Lower lobe of right lung (tissue), 2 donors: ENCODE measurements at regions of chr3 and their contacts with region 1.

Region 1: DNA sequence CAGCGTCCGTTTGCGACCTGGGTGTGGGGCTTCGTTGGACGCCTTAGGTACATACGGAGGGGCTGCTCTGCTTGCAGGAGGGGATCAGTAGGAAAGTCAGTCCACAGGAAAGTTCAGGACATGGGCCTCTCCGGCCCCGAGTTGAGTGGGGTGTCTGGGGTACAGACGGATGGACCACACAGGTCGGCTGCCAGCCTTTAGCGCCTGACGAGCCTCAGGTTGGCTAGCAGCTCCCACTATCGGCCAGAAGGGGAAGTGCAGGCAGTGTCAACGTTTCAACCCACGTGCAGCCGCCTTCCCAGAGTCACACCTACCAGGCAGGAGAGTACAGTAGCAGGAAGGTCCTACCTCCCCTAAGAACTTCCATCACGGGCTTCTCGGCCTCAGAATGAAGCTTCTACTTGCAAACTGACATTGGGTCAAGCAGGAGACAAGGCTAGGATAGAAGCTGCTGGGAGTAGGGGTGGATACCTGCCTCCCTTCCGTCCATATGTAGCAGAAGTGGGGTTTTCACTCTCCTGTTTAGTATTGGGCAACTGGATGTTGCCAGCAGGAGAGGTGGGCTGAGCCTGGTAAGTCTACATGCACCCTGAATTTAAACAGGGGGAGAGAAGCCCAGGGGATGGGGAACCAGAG is 1.8 kb upstream of the SCN5A start:
- DNase-seq: peak; percentile 76
- ATAC-seq: peak; percentile 85 to 87
- H3K4me3 ChIP-seq: no peak overlapping the region
- H3K27ac ChIP-seq: no peak overlapping the region
- H3K4me1 ChIP-seq: peaks cover 11% of the 10 kb centered on the region
- H3K27me3 ChIP-seq: peaks cover 75% of the 10 kb centered on the region
- CTCF ChIP-seq: peak; percentile 96

Region 2: GRCh38 chr3:37580237-37580636 is 1071.0 kb before region 1 on chr3:
- intact Hi-C with region 1: no loop called
- DNase-seq: no peak
- ATAC-seq: peak; percentile 19 to 39
- H3K4me3 ChIP-seq: no peak overlapping the region
- H3K27ac ChIP-seq: no peak overlapping the region
- H3K4me1 ChIP-seq: no peaks in the 10 kb centered on the region
- H3K27me3 ChIP-seq: no peaks in the 10 kb centered on the region
- CTCF ChIP-seq: no peak

Region 3: DNA sequence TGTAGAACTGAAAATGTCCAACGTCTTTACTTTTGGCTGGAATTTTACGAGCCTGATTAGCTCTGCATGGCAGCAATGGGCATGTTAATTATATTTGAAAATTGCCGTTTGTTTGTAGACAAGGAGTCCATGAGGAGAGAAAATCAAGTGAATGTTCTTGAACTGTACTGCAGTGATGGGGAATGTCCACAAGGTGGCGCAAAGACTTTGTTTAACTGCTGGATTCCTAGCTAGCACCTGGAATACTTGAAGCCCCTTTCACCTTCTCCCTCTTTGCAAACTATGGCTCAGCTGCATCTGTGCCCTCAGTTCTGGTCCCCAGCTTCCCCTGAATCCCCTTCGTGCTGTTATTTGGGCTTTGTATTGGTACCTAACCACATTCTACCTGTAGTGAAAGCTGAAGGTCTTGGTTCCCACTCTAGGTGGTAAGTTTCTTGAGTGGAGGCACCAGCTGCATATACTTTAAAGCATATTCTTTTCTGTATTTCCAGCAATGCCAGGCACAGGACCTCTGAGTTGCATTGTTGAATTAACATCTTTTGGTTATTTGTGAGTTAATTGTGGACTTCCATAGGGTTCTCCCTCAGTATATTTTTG is 129.8 kb before region 1 on chr3:
- intact Hi-C with region 1: loop called (anchors 10 kb)
- DNase-seq: no peak
- ATAC-seq: peak; percentile 68 to 72
- H3K4me3 ChIP-seq: no peak overlapping the region
- H3K27ac ChIP-seq: no peak overlapping the region
- H3K4me1 ChIP-seq: no peaks in the 10 kb centered on the region
- H3K27me3 ChIP-seq: no peaks in the 10 kb centered on the region
- CTCF ChIP-seq: peak; percentile 94

Region 4: GRCh38 chr3:38574411-38575278 is 76.6 kb before region 1 on chr3:
- intact Hi-C with region 1: no loop called
- DNase-seq: peak; percentile 10
- ATAC-seq: no peak
- H3K4me3 ChIP-seq: no peak overlapping the region
- H3K27ac ChIP-seq: no peak overlapping the region
- H3K4me1 ChIP-seq: no peaks in the 10 kb centered on the region
- H3K27me3 ChIP-seq: no peaks in the 10 kb centered on the region
- CTCF ChIP-seq: no peak